BJ (cell line): ENCODE measurements at regions of chr10 and their contacts with region 1.

Region 1: GRCh38 chr10:86770417-86770960 is 14.1 kb downstream of the BMPR1A start:
- DNase-seq: no peak
- H3K4me3 ChIP-seq: no peak overlapping the region
- H3K27me3 ChIP-seq: no peaks in the 10 kb centered on the region
- CTCF ChIP-seq: no peak

Region 2: DNA sequence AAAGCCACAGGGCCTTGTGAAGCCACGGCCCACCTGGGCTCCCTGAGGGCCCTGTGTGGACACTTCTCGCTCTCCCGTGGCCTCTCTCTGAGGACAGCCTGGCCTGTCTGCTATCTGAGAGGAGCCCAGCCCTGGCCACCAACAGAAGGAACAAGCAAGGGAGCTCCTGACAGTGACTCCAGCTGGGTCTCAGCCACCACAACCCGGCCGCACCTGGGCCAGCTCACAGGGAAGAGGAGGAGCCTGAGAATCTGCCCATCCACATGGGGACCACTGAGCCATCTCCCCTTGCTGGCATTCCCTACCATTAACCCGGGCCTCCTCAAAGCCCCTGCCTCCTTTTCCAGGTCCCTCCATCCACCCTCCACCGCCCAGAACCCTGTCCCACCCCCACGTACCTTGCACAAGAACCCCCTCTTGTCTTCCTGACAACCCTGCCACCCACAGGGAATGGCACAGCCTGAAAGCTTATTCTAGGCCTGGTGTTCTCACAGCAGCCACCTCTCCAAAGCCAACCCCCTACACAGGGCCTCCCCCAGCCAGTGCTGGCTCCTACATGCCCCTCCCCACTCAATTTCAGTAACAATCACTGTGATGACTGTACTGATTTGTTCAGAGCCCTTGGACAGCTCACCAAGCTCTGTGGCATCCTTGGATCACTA is 524.1 kb before region 1 on chr10:
- CTCF ChIA-PET with region 1: no interaction called
- POLR2A ChIA-PET with region 1: interaction called, 11 read pairs
- DNase-seq: no peak
- H3K4me3 ChIP-seq: no peak overlapping the region
- H3K27me3 ChIP-seq: no peaks in the 10 kb centered on the region
- CTCF ChIP-seq: no peak

Region 3: DNA sequence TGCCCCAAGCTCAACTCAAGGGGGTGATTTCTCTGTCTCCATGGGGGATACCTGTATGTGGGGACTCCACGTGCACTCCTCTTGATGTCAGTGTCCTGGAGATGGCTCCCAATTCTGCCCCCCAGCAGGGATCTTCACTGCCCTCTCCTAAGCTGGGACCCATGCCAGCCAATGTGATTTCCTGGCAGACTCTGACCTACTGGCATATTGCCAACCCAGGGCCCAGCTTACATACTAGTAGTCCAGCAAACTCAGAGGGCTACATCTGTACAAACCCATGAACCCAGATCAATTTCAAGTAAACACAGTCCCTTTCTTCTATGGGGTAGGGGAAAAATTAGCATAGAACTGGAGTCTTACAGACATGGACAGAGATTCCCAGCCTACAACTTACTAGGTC is 40.3 kb before region 1 on chr10:
- CTCF ChIA-PET with region 1: no interaction called
- POLR2A ChIA-PET with region 1: interaction called, 22 read pairs
- DNase-seq: no peak
- H3K4me3 ChIP-seq: no peak overlapping the region
- H3K27me3 ChIP-seq: peaks cover 1% of the 10 kb centered on the region; the same call in 1 of the 2 replicates
- CTCF ChIP-seq: no peak

Region 4: DNA sequence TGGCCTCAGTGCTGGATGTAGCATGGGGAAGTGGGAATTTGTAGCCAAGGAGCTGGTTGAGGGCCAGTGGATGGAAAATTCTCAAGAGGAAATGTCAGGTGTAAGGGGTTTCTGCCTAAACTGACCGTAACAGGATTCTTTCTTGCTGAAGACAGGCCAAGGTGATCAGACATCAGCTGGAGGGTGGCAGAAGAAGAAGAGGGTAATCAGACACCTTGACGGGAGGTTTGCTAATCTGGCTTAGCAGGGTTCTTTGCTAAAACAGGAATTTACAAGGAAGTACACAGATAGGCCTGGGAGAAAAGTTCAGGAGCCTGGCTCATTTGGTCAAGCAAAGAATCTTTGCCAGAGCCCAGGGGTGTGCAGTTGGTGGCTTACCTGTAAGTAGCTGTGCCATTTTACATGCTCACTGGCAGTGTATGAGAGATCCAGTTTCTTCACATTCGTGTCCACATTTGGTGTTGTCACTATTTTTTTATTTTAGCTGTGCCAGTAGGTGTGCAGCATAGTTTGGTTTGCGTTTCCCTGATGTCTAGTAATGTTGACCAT is 59.6 kb after region 1 on chr10:
- CTCF ChIA-PET with region 1: no interaction called
- POLR2A ChIA-PET with region 1: interaction called, 17 read pairs
- DNase-seq: no peak
- H3K4me3 ChIP-seq: no peak overlapping the region
- H3K27me3 ChIP-seq: no peaks in the 10 kb centered on the region
- CTCF ChIP-seq: no peak

Region 5: GRCh38 chr10:86863484-86863842 is 93.0 kb after region 1 on chr10:
- CTCF ChIA-PET with region 1: no interaction called
- POLR2A ChIA-PET with region 1: no interaction called
- DNase-seq: no peak
- H3K4me3 ChIP-seq: no peak overlapping the region
- H3K27me3 ChIP-seq: no peaks in the 10 kb centered on the region
- CTCF ChIP-seq: no peak